PC-9 (cell line): ENCODE measurements at regions of chr17 and their contacts with region 1.

Region 1: GRCh38 chr17:5651348-5651747 is 67.0 kb upstream of the NLRP1 start:
- DNase-seq: no peak
- H3K4me3 ChIP-seq: no peak overlapping the region
- H3K27ac ChIP-seq: no peak overlapping the region
- H3K4me1 ChIP-seq: no peaks in the 10 kb centered on the region
- H3K27me3 ChIP-seq: peaks cover 48% of the 10 kb centered on the region
- CTCF ChIP-seq: no peak

Region 2: GRCh38 chr17:5610956-5611355 is 40.4 kb before region 1 on chr17:
- CTCF ChIA-PET with region 1: no interaction called
- POLR2A ChIA-PET with region 1: no interaction called
- intact Hi-C with region 1: no loop called
- DNase-seq: peak in 1 of 2 experiments; percentile 61
- H3K4me3 ChIP-seq: no peak overlapping the region
- H3K27ac ChIP-seq: no peak overlapping the region
- H3K4me1 ChIP-seq: no peaks in the 10 kb centered on the region
- H3K27me3 ChIP-seq: no peaks in the 10 kb centered on the region
- CTCF ChIP-seq: no peak

Region 3: DNA sequence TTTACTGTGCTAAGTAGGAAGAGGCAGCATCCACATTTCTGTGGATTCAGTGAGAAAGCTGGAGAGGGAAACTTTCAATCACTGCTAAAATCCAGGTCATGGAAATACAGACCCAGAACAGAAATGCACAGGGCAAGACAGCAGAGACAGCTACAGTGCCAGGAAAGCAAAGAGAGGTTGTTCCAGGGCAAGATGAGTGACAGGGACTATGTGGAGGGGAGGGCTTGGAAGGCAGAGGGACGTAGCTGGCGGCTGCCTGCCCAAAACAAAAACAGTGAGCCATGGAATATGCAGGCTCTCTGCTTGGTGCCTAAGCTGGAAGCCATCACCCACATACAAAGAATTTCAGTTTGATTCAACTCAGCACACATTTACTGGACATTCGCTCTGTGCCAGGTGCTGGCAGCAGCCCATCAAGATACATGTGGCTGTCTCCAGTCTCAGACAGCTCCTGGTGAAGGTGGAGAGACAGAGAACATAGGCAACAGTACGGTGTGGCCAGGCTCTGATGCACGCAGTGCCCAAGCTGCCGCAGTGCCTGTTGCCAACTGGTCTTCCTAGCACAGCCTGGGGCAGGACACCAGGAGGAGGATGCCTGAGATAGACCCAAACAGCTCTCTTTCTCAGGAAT is 694.9 kb after region 1 on chr17:
- CTCF ChIA-PET with region 1: no interaction called
- POLR2A ChIA-PET with region 1: interaction called, 22 read pairs
- intact Hi-C with region 1: no loop called
- DNase-seq: no peak
- H3K4me3 ChIP-seq: no peak overlapping the region
- H3K27ac ChIP-seq: no peak overlapping the region
- H3K4me1 ChIP-seq: no peaks in the 10 kb centered on the region
- H3K27me3 ChIP-seq: peaks cover 94% of the 10 kb centered on the region
- CTCF ChIP-seq: no peak